ENCODE measurements at regions of chr3 and their contacts with region 1.

Region 1: DNA sequence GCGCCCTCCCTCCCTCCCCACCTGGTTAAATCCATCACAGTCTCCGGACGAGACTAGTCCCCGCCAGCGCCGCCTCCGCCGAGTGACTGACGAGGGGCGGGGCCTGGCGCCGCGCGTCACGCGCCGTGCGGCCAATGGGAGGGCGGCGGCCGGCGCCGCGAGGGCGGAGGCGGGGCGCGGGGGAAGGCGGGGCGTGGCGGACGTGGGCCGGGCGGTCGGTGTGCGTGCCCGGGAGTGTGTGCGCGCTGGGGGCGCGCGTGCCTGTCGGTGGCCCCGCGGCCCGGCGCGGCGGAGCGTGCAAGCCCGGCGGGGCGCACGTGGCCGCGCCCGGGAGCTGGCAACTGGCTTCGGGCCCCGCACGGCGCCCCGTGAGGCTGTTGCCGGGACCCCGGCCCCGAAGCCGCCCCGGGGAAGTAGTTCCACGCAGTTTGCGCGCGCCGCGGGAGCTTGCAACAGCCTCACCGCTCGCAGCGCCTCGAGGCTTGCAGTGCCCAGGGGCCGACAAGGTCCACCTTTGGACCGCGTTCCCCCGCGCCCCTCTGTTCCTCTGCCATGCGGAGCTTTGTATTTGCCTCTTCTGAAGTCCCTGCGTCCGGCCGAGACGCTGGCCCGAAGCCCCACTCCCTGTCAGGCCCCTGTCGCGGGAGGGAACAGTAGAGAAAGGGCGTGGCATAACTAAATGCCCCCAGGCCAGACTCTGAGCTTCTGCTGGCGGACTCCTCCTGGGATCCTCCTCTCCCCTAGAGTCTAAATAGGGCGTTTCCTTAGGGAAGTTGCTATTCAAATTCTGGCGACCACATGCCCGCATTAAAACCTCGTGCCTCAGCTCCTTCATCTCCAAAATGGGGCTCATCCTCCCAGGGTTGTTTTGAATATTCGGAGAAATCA is 400.9 kb downstream of the SHQ1 start:
- DNase-seq: peak; percentile 99
- H3K4me3 Mint-ChIP-seq: peak overlapping the region; percentile 92
- H3K27ac Mint-ChIP-seq: peak overlapping the region; percentile 86
- H3K4me1 Mint-ChIP-seq: peaks cover 46% of the 10 kb centered on the region
- H3K27me3 Mint-ChIP-seq: peaks cover 4% of the 10 kb centered on the region

Region 2: GRCh38 chr3:72270072-72270681 is 177.1 kb before region 1 on chr3:
- intact Hi-C with region 1: loop called (anchors 10 kb)
- DNase-seq: peak; percentile 65
- H3K4me3 Mint-ChIP-seq: peak overlapping the region; percentile 12
- H3K27ac Mint-ChIP-seq: peak overlapping the region; percentile 67
- H3K4me1 Mint-ChIP-seq: peaks cover 57% of the 10 kb centered on the region
- H3K27me3 Mint-ChIP-seq: no peaks in the 10 kb centered on the region

Region 3: DNA sequence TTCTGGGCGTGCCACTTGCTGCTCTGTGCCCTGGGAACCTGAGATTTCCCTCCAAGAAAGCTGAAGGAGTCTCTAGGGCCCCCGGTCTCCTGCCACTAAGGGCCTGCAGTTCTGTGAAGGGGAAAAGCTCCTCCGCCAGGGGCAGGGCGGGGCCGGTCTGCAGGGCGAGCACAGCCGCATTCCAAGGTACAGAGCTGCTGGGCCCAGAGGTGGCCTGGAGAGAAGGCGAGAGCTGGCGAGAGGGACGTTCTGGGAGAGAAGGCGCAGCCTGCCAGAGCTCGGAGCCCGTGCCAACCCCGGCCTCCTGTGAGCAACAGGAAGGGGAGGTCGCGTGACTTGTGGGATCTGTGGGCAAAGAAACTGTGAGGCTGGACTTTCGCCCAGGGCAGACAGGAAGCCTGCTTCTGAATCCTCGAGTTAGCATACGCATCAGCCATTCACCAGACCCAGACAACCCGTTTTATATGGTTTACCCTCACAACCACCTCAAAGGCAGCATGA is 99.4 kb before region 1 on chr3:
- intact Hi-C with region 1: loop called (anchors 2 kb)
- DNase-seq: peak; percentile 75
- H3K4me3 Mint-ChIP-seq: no peak overlapping the region
- H3K27ac Mint-ChIP-seq: no peak overlapping the region
- H3K4me1 Mint-ChIP-seq: peaks cover 51% of the 10 kb centered on the region
- H3K27me3 Mint-ChIP-seq: no peaks in the 10 kb centered on the region

Region 4: DNA sequence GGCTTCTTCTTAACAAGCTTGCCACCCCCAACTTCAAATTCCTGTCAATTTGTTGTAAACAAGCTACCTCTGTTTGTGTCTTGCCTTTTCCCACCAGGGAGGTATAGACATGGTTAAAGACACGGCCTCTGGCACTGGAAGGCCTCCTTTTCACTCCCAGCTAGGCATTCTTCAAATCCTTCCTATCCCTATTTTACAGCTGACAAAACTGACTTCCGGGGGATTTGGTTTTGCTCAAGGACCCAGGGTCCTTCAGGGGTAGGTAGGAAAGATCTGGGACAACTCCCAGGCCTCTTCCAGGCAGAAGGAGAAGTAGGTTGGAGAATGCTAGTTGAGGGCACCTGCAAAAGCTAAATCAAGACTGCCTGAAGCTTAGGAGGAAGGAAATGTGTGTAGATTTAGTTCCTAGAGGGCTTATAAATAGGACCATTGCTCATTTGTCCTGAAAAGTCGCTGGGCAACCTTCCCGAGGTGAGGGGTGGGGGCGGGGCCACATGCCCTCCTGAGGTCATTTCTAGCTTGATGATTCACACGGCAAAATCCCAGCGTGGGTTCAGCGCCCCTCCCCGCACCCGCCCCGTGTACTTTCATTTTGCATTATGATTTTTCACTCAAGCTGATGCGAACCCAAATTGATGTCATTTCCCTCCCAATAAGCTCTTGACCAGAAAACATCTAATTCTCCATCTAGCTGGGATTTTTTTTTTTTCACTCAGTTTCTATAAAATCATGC is 35.5 kb after region 1 on chr3:
- intact Hi-C with region 1: loop called (anchors 1 kb)
- DNase-seq: peak; percentile 85
- H3K4me3 Mint-ChIP-seq: peak overlapping the region; percentile 78
- H3K27ac Mint-ChIP-seq: peak overlapping the region; percentile 96
- H3K4me1 Mint-ChIP-seq: peaks cover 67% of the 10 kb centered on the region
- H3K27me3 Mint-ChIP-seq: no peaks in the 10 kb centered on the region

Region 5: GRCh38 chr3:72523429-72524151 is 76.3 kb after region 1 on chr3:
- intact Hi-C with region 1: loop called (anchors 1 kb)
- DNase-seq: no peak
- H3K4me3 Mint-ChIP-seq: no peak overlapping the region
- H3K27ac Mint-ChIP-seq: peak overlapping the region; percentile 91
- H3K4me1 Mint-ChIP-seq: peaks cover 36% of the 10 kb centered on the region
- H3K27me3 Mint-ChIP-seq: no peaks in the 10 kb centered on the region

Region 6: GRCh38 chr3:72847751-72848702 is 400.7 kb after region 1 on chr3 and contains the start of gene SHQ1:
- intact Hi-C with region 1: loop called (anchors 1 kb)
- DNase-seq: peak; percentile 99
- H3K4me3 Mint-ChIP-seq: peak within 1 kb of the TSS; percentile 93
- H3K27ac Mint-ChIP-seq: peak within 1 kb of the TSS; percentile 91
- H3K4me1 Mint-ChIP-seq: peaks cover 41% of the 10 kb centered on the region
- H3K27me3 Mint-ChIP-seq: no peaks in the 10 kb centered on the region
- total RNA-seq, gene SHQ1: 46.8 and 47.2 TPM in 2 replicates

Measured in activated CD4-positive, alpha-beta T cell treated with anti-CD3 and anti-CD28 coated beads, Interleukin-2, amount 10 ng/mL, durations not matched to agents 24 days and 14 days (primary cell).